ENCODE measurements at regions of chr4 and their contacts with region 1.

Region 1: GRCh38 chr4:8607603-8608481 is 15.3 kb downstream of the CPZ start:
- DNase-seq: peak; percentile 89
- ATAC-seq: peak; percentile 88
- H3K4me3 Mint-ChIP-seq: no peak overlapping the region
- H3K27ac Mint-ChIP-seq: no peak overlapping the region
- H3K4me1 Mint-ChIP-seq: no peaks in the 10 kb centered on the region
- H3K27me3 Mint-ChIP-seq: peaks cover 3% of the 10 kb centered on the region; the same call in 1 of the 2 replicates
- CTCF ChIP-seq: peak; percentile 98

Region 2: GRCh38 chr4:8478801-8479744 is 128.8 kb before region 1 on chr4:
- CTCF ChIA-PET with region 1: interaction called, 15 read pairs
- POLR2A ChIA-PET with region 1: no interaction called
- DNase-seq: no peak
- ATAC-seq: no peak; the same call in 1 of the 2 replicates
- H3K4me3 Mint-ChIP-seq: no peak overlapping the region
- H3K27ac Mint-ChIP-seq: peak overlapping the region; percentile 59; the same call in 1 of the 2 replicates
- H3K4me1 Mint-ChIP-seq: peaks cover 22% of the 10 kb centered on the region
- H3K27me3 Mint-ChIP-seq: no peaks in the 10 kb centered on the region
- CTCF ChIP-seq: no peak

Region 3: DNA sequence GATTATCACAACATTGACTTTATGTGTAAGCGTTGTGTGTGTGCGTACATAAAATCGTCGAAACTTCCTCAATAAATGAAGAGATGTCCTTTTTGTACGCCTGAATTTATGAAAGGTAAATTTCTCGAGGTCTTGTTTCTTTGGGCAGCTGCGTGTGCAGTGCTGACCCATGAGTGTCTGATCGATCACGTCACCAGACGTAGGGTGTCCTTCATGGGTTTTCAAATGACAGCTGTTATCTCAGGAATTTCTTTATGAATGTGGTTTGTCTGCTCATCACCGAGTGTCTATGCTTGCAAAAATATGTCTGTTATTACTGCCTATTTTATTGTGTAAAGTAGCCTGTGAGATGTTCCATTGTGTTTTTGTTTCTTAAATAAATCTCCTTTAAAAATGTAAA is 95.3 kb before region 1 on chr4:
- CTCF ChIA-PET with region 1: no interaction called
- POLR2A ChIA-PET with region 1: no interaction called
- DNase-seq: no peak
- ATAC-seq: no peak
- H3K4me3 Mint-ChIP-seq: no peak overlapping the region
- H3K27ac Mint-ChIP-seq: no peak overlapping the region
- H3K4me1 Mint-ChIP-seq: peaks cover 3% of the 10 kb centered on the region
- H3K27me3 Mint-ChIP-seq: no peaks in the 10 kb centered on the region
- CTCF ChIP-seq: no peak

Region 4: DNA sequence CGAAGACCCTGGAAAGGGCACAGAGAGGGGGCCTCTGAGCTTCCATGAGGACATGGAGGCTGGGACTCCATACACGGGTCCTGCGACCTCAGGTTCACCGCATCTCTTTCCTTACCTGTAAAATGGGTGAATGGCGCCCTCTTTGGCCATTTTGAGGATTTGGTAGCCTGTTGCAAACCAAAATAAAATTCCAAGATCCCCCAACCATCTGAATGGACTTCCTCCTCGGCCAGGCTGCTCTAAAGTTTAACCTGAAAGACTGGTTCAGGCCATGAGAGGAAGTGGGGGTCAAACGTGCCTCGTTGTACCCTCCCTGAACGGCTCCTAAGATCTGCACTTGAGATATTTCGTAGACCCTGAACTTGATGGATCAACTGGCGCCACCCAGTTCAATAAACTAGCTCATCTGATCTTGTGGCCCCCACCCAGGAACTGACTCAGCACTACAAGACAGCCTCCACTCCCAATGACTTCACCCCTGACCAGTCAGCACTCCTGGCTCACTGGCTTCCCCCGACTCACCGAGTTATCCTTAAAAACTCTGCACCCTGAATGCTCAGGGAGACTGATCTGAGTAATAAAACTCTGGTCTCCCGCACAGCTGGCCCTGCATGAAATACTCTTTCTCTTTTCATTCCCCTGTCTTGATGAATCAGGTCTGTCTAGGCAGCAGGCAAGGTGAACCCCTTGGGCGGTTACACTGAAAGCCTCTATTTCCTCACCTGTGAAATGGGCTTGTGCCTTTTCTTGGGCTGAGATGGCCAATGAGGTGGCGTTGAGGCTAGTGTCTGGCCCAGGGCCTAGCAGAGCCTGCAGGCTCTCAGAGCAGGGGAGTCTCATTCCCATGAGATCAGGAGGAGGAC is 60.5 kb before region 1 on chr4:
- CTCF ChIA-PET with region 1: interaction called, 32 read pairs
- POLR2A ChIA-PET with region 1: no interaction called
- DNase-seq: peak; percentile 36
- ATAC-seq: peak; percentile 78
- H3K4me3 Mint-ChIP-seq: no peak overlapping the region
- H3K27ac Mint-ChIP-seq: 0 out of 2 replicates have a peak overlapping the region, but pooled peaks have one; percentile 26
- H3K4me1 Mint-ChIP-seq: peaks cover 15% of the 10 kb centered on the region
- H3K27me3 Mint-ChIP-seq: peaks cover 3% of the 10 kb centered on the region; the same call in 1 of the 2 replicates
- CTCF ChIP-seq: peak; percentile 63

Region 5: DNA sequence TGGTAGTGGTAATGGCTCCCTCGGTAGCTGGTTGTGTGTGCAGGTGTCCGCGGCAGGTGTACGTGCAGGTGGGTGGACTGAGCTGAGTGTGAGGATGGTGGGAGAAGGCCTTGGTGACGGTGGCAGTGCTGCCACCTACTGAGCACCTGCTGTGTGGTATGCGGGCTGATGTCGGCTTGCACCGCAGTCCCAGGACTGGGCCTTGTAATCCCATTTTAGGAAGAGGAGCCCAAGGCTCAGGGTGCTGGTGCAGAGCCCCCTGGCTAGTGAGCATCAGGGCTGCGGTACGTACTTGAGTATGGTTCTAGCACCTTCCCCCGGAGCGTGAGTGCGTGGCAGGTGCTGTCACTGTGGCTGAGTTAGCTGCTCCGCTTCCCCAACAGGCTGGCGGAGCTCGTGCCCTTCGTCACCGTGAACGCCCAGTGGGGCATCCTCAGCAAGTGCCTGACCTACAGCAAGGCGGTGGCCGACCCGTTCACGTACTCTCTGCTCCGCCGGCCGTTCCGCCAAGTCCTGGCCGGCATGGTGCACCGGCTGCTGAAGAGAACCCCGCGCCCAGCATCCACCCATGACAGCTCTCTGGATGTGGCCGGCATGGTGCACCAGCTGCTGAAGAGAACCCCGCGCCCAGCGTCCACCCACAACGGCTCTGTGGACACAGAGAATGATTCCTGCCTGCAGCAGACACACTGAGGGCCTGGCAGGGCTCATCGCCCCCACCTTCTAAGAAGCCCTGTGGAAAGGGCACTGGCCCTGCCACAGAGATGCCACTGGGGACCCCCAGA is 21.0 kb before region 1 on chr4:
- CTCF ChIA-PET with region 1: interaction called, 23 read pairs
- POLR2A ChIA-PET with region 1: no interaction called
- DNase-seq: peak; percentile 11
- ATAC-seq: peak; percentile 19
- H3K4me3 Mint-ChIP-seq: no peak overlapping the region
- H3K27ac Mint-ChIP-seq: no peak overlapping the region
- H3K4me1 Mint-ChIP-seq: peaks cover 29% of the 10 kb centered on the region
- H3K27me3 Mint-ChIP-seq: peaks cover 22% of the 10 kb centered on the region
- CTCF ChIP-seq: no peak

Region 6: DNA sequence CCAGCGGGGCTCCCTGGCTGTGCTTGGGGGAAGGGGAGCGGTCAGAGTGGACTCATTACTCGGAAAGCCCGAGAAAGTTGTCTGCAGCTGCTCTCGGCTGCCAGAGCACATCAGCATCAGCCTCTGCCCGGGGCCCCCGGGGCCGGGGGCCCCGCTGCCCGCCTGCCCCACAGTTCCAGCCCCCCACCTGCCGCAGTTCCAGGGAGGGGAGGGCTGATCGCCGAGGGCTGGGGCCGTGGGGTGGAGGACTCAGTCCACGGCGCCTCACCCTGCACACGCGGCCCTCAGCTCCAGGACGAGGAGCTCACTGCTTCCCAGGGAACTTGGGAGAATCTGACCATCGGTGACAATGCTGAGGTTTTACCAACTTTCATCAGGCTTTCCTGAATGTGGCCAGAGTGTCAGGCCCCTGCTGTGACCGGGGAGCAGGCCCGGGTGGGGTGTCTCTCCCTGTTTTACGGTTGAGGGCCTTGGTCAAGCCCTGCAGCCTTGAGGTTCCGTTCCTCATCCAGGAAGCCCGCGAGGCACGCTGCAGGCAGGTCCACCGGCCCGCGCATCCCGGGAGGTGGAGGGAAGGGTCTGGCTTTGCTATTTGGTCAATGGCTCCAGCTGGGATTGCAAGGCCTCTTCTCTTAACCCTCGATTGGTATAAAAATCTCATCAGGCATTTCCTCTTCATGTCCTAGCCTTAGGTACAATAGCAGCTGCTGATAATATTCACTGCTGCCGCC is 42.0 kb after region 1 on chr4:
- CTCF ChIA-PET with region 1: interaction called, 16 read pairs
- POLR2A ChIA-PET with region 1: no interaction called
- DNase-seq: no peak
- ATAC-seq: no peak
- H3K4me3 Mint-ChIP-seq: no peak overlapping the region
- H3K27ac Mint-ChIP-seq: 0 out of 2 replicates have a peak overlapping the region, but pooled peaks have one; percentile 8
- H3K4me1 Mint-ChIP-seq: peaks cover 7% of the 10 kb centered on the region; the same call in 1 of the 2 replicates
- H3K27me3 Mint-ChIP-seq: no peaks in the 10 kb centered on the region
- CTCF ChIP-seq: no peak

Region 7: DNA sequence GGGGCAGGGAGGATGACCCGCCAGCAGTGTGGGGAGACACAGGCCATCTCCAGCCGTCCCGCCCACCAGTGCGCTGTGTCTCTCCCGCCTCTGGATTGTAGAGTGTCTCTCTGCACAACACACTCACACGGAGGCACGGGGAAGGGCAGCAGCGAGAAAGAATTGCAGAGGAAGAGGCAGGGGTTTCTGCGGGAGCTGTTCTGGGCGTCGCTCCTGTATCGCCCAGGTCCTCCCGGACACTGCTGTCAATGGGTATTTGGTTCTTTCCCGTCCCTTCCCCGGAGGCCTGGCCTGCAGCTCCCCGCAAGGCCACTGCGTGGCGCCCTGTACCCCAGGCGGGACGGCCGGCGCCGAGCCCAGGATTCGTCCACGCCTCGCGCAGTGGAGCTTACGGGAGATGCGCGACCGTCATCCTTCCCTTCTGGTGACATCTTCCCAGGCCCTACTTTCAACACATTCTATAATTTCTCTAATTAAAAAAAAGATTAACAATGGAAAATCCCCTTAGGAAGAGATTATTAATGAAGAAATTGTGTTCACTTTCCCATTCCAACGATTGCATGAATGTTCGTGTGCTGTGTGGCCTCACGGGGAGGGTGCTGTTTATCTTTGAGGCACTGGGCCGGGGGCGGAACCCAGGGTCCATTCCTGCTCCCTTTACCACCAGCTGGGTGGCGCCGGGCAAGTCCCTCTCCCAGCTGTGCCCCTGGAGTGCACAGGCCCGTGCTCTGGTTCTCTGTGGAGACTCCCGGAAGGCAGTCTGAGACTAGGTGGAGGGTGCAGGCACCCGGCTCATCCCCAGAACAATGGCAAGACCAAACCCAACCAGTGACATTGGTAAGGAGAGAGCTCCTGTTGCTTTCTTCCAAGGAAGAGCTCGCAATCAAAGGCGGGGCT is 80.4 kb after region 1 on chr4:
- CTCF ChIA-PET with region 1: interaction called, 22 read pairs
- POLR2A ChIA-PET with region 1: no interaction called
- DNase-seq: peak; percentile 89
- ATAC-seq: peak; percentile 97
- H3K4me3 Mint-ChIP-seq: no peak overlapping the region
- H3K27ac Mint-ChIP-seq: no peak overlapping the region
- H3K4me1 Mint-ChIP-seq: 0 out of 2 replicates have a peak, but pooled peaks cover 2% of the 10 kb centered on the region
- H3K27me3 Mint-ChIP-seq: peaks cover 48% of the 10 kb centered on the region
- CTCF ChIP-seq: peak; percentile 86

Region 8: DNA sequence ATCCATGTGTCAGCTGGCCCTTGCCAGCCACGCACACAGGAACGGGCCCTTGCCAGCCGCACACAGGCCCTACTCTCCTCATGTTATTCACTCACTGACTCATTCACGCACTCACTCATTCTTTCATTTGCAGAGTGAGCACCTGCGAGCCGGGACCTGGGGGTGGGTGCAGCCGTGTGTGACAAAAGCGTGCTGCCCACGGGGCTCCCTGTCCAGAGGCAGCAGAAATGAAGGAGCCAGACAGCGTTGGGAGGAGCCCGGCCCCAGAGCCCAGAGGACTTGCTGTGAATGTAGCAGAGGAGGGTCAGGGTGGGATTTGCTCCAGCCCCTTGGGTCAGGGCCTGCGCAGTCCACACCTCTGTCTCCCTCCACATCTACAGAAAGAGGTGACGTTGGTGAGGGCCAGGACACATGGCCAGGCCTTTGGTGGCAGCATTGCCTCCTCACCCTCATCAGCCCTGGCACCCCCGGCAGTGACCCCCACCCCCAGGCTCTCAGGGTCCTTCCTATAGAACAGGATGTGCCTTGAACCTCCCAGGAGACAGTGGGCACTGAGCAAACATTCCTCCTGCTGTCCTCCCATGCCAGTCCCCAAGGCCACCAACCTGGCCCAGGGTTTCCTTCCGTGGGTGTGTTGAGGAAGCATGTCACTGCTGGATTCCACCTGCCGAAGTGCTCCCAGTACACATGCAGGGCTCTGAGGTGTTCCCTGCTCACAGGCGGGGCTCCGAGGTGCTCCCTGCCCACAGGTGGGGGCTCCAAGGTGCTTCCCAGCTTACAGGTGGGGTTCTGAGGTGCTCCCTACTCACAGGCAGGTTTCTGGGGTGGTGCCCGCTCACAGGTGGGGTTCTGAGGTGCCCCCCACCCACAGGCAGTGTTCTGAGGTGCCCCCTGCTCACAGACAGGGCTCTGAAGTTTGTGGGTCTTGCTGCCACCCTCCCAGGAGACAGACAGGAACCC is 158.1 kb after region 1 on chr4:
- CTCF ChIA-PET with region 1: no interaction called
- POLR2A ChIA-PET with region 1: no interaction called
- DNase-seq: peak; percentile 7
- ATAC-seq: no peak
- H3K4me3 Mint-ChIP-seq: no peak overlapping the region
- H3K27ac Mint-ChIP-seq: no peak overlapping the region
- H3K4me1 Mint-ChIP-seq: peaks cover 5% of the 10 kb centered on the region
- H3K27me3 Mint-ChIP-seq: no peaks in the 10 kb centered on the region; the same call in 1 of the 2 replicates
- CTCF ChIP-seq: no peak

Measured in WTC11 (cell line).